Caco-2 (cell line): ENCODE measurements at regions of chr20 and their contacts with region 1.

Region 1: GRCh38 chr20:43138061-43138860 is 51.4 kb downstream of the PTPRT start:
- DNase-seq: no peak
- H3K4me3 ChIP-seq: no peak overlapping the region
- H3K4me3 Mint-ChIP-seq: no peak overlapping the region
- H3K27ac Mint-ChIP-seq: peak overlapping the region; percentile 5
- H3K4me1 ChIP-seq: peaks cover 16% of the 10 kb centered on the region
- H3K4me1 Mint-ChIP-seq: peaks cover 9% of the 10 kb centered on the region
- H3K27me3 ChIP-seq: no peaks in the 10 kb centered on the region
- H3K27me3 Mint-ChIP-seq: no peaks in the 10 kb centered on the region
- CTCF ChIP-seq: no peak

Region 2: GRCh38 chr20:42981253-42981652 is 157.0 kb before region 1 on chr20:
- CTCF ChIA-PET with region 1: no interaction called
- POLR2A ChIA-PET with region 1: no interaction called
- intact Hi-C with region 1: loop called (anchors 1 kb)
- DNase-seq: peak; percentile 45 to 74
- H3K4me3 ChIP-seq: no peak overlapping the region
- H3K4me3 Mint-ChIP-seq: peak overlapping the region; percentile 39
- H3K27ac Mint-ChIP-seq: peak overlapping the region; percentile 67
- H3K4me1 ChIP-seq: peaks cover 21% of the 10 kb centered on the region
- H3K4me1 Mint-ChIP-seq: peaks cover 21% of the 10 kb centered on the region
- H3K27me3 ChIP-seq: no peaks in the 10 kb centered on the region
- H3K27me3 Mint-ChIP-seq: peaks cover 3% of the 10 kb centered on the region
- CTCF ChIP-seq: no peak

Region 3: GRCh38 chr20:43119720-43120119 is 18.5 kb before region 1 on chr20:
- CTCF ChIA-PET with region 1: no interaction called
- POLR2A ChIA-PET with region 1: no interaction called
- intact Hi-C with region 1: no loop called
- DNase-seq: no peak
- H3K4me3 ChIP-seq: no peak overlapping the region
- H3K4me3 Mint-ChIP-seq: no peak overlapping the region
- H3K27ac Mint-ChIP-seq: no peak overlapping the region
- H3K4me1 ChIP-seq: no peaks in the 10 kb centered on the region
- H3K4me1 Mint-ChIP-seq: no peaks in the 10 kb centered on the region
- H3K27me3 ChIP-seq: no peaks in the 10 kb centered on the region
- H3K27me3 Mint-ChIP-seq: no peaks in the 10 kb centered on the region
- CTCF ChIP-seq: no peak

Region 4: GRCh38 chr20:43229696-43230095 is 91.4 kb after region 1 on chr20:
- CTCF ChIA-PET with region 1: no interaction called
- POLR2A ChIA-PET with region 1: no interaction called
- intact Hi-C with region 1: no loop called
- DNase-seq: no peak
- H3K4me3 ChIP-seq: no peak overlapping the region
- H3K4me3 Mint-ChIP-seq: no peak overlapping the region
- H3K27ac Mint-ChIP-seq: no peak overlapping the region
- H3K4me1 ChIP-seq: no peaks in the 10 kb centered on the region
- H3K4me1 Mint-ChIP-seq: no peaks in the 10 kb centered on the region
- H3K27me3 ChIP-seq: no peaks in the 10 kb centered on the region
- H3K27me3 Mint-ChIP-seq: peaks cover 36% of the 10 kb centered on the region
- CTCF ChIP-seq: no peak